CD4-positive, alpha-beta T cell (primary cell): ENCODE measurements at regions of chr16 and their contacts with region 1.

Region 1: DNA sequence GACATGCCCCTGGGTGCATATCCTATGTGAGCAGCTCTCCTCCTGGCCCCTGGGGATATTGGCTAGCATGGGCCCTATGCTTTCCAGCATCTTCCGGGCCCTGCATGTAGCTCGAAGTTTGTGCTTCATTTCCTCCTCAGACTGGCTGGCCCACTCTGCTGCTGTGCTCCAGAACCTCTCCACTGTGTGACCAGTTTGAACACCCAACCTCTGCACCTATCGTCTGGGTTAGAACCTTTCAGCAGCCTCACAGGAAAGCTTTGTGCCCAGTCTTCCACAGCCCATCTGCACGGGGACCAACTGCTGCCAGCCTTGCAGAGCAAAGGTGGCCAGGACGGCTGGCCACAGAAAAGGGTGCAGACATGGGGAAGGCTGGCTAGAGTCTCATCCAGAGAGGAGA is 10.2 kb upstream of the CLEC18B start:
- DNase-seq: no peak
- ATAC-seq: no peak
- H3K4me3 ChIP-seq: no peak overlapping the region
- H3K4me3 Mint-ChIP-seq: no peak overlapping the region
- H3K27ac ChIP-seq: no peak overlapping the region
- H3K27ac Mint-ChIP-seq: no peak overlapping the region
- H3K4me1 ChIP-seq: no peaks in the 10 kb centered on the region
- H3K4me1 Mint-ChIP-seq: no peaks in the 10 kb centered on the region
- H3K27me3 ChIP-seq: no peaks in the 10 kb centered on the region
- H3K27me3 Mint-ChIP-seq: no peaks in the 10 kb centered on the region
- CTCF ChIP-seq: no peak

Region 2: GRCh38 chr16:74309789-74310781 is 121.4 kb before region 1 on chr16:
- CTCF ChIA-PET with region 1: no interaction called
- POLR2A ChIA-PET with region 1: no interaction called
- intact Hi-C with region 1: loop called (anchors 2 to 5 kb)
- DNase-seq: peak in 4 of 14 experiments; percentile 29 to 67 (median 46)
- ATAC-seq: no peak
- H3K4me3 ChIP-seq: no peak overlapping the region
- H3K4me3 Mint-ChIP-seq: no peak overlapping the region
- H3K27ac ChIP-seq: no peak overlapping the region
- H3K27ac Mint-ChIP-seq: no peak overlapping the region
- H3K4me1 ChIP-seq: no peaks in the 10 kb centered on the region
- H3K4me1 Mint-ChIP-seq: no peaks in the 10 kb centered on the region
- H3K27me3 ChIP-seq: no peaks in the 10 kb centered on the region
- H3K27me3 Mint-ChIP-seq: no peaks in the 10 kb centered on the region
- CTCF ChIP-seq: peak; percentile 75